A673 (cell line): ENCODE measurements at regions of chr13 and their contacts with region 1.

Region 1: GRCh38 chr13:51636349-51636890 is 52.2 kb downstream of the WDFY2 start:
- DNase-seq: no peak
- H3K4me3 ChIP-seq: no peak overlapping the region
- H3K27ac ChIP-seq: peak overlapping the region; percentile 79
- H3K4me1 ChIP-seq: peaks cover 87% of the 10 kb centered on the region
- H3K27me3 ChIP-seq: no peaks in the 10 kb centered on the region
- CTCF ChIP-seq: no peak

Region 2: GRCh38 chr13:51192348-51192747 is 444.1 kb before region 1 on chr13:
- CTCF ChIA-PET with region 1: no interaction called
- POLR2A ChIA-PET with region 1: no interaction called
- intact Hi-C with region 1: no loop called
- DNase-seq: no peak
- H3K4me3 ChIP-seq: no peak overlapping the region
- H3K27ac ChIP-seq: no peak overlapping the region
- H3K4me1 ChIP-seq: no peaks in the 10 kb centered on the region
- H3K27me3 ChIP-seq: no peaks in the 10 kb centered on the region
- CTCF ChIP-seq: no peak

Region 3: GRCh38 chr13:51249770-51250741 is 386.4 kb before region 1 on chr13:
- CTCF ChIA-PET with region 1: no interaction called
- POLR2A ChIA-PET with region 1: no interaction called
- intact Hi-C with region 1: no loop called
- DNase-seq: no peak
- H3K4me3 ChIP-seq: no peak overlapping the region
- H3K27ac ChIP-seq: no peak overlapping the region
- H3K4me1 ChIP-seq: no peaks in the 10 kb centered on the region
- H3K27me3 ChIP-seq: no peaks in the 10 kb centered on the region
- CTCF ChIP-seq: peak; percentile 60

Region 4: DNA sequence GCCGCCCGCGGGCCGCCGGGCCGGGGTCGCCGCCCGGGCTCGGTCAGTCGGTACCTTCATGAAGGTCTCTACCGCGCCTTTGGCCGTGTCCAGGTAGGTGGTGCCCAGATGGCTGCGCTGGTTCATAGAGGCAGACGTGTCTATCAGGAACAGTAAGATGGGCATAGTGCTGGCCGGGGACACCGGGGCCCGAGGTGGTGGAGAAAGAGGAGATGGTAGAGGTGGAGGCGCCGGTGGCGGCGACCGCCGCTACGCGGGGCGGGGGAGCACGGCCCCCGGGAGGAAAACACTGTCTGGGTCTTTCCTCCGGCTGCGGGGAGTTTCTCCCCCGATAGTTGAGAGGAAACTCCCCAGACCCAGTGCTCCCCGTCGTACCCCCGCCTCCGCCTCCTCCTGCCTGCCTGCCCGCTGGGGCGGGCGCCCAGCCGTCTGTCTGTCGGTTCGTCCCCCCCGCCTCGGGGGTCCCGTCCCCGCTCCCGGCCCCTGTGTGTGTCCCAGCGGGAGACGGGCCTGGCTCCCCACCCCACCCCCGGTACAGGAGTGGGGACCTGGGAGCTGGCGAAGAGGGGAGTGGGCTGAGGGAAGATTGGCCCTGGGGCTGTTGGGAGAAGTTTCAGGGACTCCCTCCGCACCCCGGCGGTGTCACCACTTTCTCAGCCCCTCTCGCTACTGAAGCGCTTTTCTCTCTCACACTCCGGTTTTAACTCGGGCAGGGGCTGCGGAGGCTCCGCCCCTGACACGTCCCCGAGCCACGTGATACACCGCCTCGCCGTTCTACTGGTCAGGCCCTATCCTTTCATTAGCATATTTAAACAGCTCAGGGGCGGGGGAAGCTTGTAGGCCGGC is 183.8 kb before region 1 on chr13 and contains the start of gene INTS6:
- CTCF ChIA-PET with region 1: no interaction called
- POLR2A ChIA-PET with region 1: no interaction called
- intact Hi-C with region 1: loop called (anchors 5 kb)
- DNase-seq: peak; percentile 100
- H3K4me3 ChIP-seq: peak within 1 kb of the TSS; percentile 95
- H3K27ac ChIP-seq: peak within 1 kb of the TSS; percentile 99
- H3K4me1 ChIP-seq: peaks cover 35% of the 10 kb centered on the region
- H3K27me3 ChIP-seq: no peaks in the 10 kb centered on the region
- CTCF ChIP-seq: no peak
- total RNA-seq, gene INTS6: 86.2 and 90.4 TPM in 2 replicates